GM10248 (cell line): ENCODE measurements at regions of chr14 and their contacts with region 1.

Region 1: DNA sequence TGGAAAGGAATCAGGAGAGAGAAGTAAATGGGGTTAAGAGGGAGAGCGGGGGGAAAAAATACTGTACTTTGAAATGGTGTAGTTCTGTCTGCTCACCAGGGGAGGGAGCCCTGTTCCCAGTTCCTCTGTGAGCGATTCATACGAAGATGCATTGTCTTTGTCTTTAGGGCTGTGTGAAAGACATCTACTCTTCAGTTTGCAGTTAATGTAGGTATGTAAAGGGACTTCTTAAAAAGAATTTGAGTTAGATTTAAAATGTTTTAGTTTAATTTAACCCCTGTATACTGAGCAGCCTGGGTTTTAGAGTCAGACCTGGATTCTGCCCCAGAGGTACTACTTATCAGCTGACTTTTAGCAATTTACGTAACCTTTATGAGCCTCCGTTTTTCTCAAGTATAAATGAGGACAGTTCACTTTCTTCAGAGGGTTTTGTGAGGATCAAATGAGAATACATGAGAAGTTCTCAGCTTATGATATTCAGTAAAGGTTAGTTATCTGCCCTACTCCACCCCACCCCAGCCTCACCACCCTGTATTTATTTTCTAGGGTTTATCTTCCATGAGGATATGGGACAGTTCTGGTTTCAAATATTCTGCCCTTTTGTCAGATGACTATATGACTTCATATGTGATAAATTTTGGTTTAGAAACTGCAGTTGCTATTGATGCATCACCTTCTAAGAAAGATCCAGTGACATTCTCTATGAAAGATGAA is 82.5 kb upstream of the EVL start:
- DNase-seq: peak; percentile 75
- CTCF ChIP-seq: peak; percentile 83

Region 2: DNA sequence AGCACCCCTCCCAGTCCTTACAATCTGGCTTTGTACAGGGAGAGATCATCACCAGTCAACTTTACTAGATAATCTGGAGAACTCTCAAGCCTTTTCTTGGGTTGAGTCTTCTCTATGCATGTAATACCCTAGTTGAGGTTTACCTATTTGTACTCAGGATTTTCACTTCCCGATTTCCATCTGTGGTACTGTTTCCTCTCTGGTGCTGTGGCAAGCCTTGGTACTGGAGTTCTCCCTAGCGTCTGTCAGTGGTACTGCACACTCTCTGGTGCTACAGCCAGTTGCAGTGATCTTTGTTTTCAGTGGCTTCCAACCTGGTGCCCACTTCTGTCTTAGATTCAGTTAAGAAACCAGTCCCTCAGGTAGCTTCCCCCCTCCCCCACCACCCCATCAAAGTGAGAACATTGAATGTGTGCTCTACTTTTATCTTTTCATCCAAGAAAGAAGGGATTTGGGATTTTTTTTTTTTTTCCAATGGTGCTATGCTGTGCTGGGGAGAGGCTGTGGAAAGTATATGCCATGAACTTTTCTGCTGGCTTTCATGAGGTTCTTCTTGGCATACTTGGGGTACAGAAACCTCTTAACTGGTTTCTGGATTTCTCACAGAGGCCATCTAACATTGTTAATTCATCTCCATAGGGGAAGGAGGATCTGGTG is 13.1 kb after region 1 on chr14:
- CTCF ChIA-PET with region 1: interaction called, 22 read pairs
- POLR2A ChIA-PET with region 1: no interaction called
- DNase-seq: peak; percentile 77
- CTCF ChIP-seq: peak; percentile 79

Region 3: GRCh38 chr14:100015251-100015655 is 32.6 kb after region 1 on chr14:
- CTCF ChIA-PET with region 1: interaction called, 33 read pairs
- POLR2A ChIA-PET with region 1: no interaction called
- DNase-seq: peak; percentile 63
- CTCF ChIP-seq: no peak

Region 4: DNA sequence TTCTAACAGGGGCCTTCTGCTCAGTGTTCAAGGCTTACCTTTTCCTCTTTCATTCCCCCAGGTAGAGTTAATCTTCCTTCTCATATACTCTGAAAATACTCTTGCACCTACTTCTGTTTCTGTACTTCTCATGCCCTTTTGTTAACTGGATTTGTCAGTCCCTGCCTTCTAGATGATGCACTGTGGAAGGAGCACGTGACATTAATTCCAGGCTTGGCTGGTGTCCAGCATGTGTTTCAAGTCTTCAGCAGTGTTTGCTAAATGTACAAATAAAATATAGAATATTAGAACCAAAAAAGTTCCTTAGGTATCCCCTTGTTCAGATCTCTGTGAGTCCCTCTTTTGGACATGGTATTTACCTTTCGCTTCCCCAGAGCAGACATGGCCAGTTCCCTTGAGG is 54.7 kb after region 1 on chr14:
- CTCF ChIA-PET with region 1: interaction called, 16 read pairs
- POLR2A ChIA-PET with region 1: no interaction called
- DNase-seq: no peak
- CTCF ChIP-seq: no peak

Region 5: GRCh38 chr14:100067971-100068959 is 85.6 kb after region 1 on chr14:
- CTCF ChIA-PET with region 1: interaction called, 25 read pairs
- POLR2A ChIA-PET with region 1: no interaction called
- DNase-seq: peak; percentile 32
- CTCF ChIP-seq: no peak

Region 6: DNA sequence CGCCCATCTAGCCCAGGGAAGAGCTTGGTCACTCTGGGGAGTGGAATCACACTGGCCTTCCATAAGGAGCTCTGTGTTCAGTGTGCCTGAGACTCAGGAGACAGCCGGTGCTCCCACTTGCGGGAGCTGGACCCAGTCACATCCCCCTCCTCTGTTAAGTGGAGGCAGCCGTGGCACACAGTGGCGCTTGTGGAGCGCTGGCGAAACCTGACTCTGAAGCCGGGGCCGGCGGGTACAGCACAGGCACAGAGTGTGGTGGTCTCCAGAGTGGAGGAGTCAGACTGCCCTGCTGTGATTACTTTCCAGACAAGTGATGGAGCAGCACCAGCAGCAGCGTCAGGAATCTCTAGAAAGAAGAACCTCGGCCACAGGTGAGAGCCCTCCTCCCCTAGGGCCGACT is 143.7 kb after region 1 on chr14:
- CTCF ChIA-PET with region 1: no interaction called
- POLR2A ChIA-PET with region 1: no interaction called
- DNase-seq: no peak
- CTCF ChIP-seq: no peak